WTC11 (cell line): ENCODE measurements at regions of chr16 and their contacts with region 1.

Region 1: DNA sequence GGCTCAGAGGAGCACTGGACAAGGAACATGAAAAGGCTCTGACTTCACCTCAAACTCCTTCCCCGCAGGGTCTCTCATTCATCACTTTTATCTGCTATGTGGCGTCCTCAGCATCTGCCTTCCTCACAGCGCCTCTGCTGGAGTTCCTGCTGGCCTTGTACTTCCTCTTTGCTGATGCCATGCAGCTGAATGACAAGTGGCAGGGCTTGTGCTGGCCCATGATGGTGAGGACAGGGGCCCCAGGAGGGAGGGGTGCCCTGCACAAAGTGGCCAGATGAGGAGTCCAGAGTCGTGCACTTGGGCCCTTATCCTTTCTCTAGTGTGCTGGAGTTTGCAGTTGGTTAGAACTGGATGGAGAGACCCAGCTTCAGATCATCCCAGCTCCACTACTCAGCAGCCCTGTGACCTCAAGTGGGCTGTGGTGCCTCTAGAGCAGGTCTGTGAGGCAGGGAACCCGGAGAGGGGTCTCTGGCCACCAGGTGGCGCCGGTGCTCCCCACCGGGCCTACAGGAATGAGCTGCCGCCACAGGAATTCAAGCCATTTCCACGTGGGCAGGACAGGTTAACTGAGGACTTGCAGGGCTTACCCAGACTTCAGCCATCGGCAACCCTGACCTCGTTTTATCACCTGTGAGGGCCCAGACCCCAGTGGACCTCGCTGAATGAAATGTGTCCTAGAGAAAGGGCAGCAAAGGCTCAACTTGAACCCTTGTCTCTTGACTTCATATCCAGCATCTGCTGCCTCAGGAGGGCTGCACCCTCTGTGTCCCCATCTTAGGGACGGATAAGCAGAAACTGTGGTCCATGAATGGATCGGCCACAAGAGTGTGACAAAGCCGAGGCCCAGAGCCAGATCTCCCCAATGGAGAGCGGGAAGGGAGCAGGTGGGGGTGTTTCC is 4.0 kb downstream of the CMTM3 start:
- DNase-seq: peak; percentile 94
- ATAC-seq: peak; percentile 54
- H3K4me3 Mint-ChIP-seq: no peak overlapping the region
- H3K27ac Mint-ChIP-seq: peak overlapping the region; percentile 84; the same call in 1 of the 2 replicates
- H3K4me1 Mint-ChIP-seq: peaks cover 26% of the 10 kb centered on the region
- H3K27me3 Mint-ChIP-seq: no peaks in the 10 kb centered on the region
- CTCF ChIP-seq: peak; percentile 75

Region 2: GRCh38 chr16:66406534-66407221 is 201.8 kb before region 1 on chr16:
- CTCF ChIA-PET with region 1: interaction called, 11 read pairs
- POLR2A ChIA-PET with region 1: no interaction called
- DNase-seq: peak; percentile 91
- ATAC-seq: peak; percentile 96
- H3K4me3 Mint-ChIP-seq: peak overlapping the region; percentile 83
- H3K27ac Mint-ChIP-seq: peak overlapping the region; percentile 86; the same call in 1 of the 2 replicates
- H3K4me1 Mint-ChIP-seq: peaks cover 9% of the 10 kb centered on the region
- H3K27me3 Mint-ChIP-seq: peaks cover 13% of the 10 kb centered on the region
- CTCF ChIP-seq: peak; percentile 96

Region 3: GRCh38 chr16:66580605-66581209 is 27.8 kb before region 1 on chr16:
- CTCF ChIA-PET with region 1: interaction called, 17 read pairs
- POLR2A ChIA-PET with region 1: no interaction called
- DNase-seq: no peak
- ATAC-seq: peak; percentile 63
- H3K4me3 Mint-ChIP-seq: no peak overlapping the region
- H3K27ac Mint-ChIP-seq: no peak overlapping the region
- H3K4me1 Mint-ChIP-seq: peaks cover 29% of the 10 kb centered on the region
- H3K27me3 Mint-ChIP-seq: peaks cover 49% of the 10 kb centered on the region
- CTCF ChIP-seq: no peak

Region 4: DNA sequence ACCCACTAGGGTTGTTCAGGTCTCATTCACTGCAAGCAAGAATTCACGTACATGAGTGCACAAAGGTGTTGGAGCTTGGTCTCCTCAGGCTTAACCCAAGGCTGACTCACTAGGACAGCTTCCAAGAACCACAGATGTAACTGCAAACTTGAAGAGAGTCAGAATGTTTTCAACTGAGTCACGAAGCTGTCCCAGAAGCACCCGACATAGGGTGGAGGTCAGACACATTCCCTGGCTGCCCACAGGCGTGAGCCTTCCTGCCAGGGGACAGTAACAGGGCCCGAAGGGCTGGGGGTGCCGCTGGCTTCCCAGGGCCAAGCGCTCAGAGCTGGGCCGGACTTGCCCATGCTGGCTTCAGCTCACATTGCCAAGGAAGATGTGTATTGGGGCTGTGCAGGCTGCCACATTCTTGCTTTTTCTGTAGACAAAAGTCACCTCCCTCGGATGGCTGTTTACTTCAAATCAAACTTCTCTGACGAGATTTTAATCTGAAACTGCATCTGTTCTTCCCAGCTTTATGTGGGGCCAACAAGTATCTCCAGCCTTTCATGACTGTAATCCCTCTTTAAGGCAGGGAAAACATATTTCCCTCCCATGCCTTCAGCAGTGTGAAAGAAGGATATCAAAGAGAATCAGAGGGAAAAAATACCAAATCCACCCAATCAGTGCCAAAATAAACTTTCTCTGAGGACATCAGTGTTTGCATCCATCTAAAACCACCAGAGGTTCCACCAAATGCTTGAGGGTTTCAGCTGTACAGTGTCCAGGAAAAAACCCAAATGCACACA is 10.3 kb after region 1 on chr16:
- CTCF ChIA-PET with region 1: interaction called, 60 read pairs
- POLR2A ChIA-PET with region 1: no interaction called
- DNase-seq: no peak
- ATAC-seq: no peak
- H3K4me3 Mint-ChIP-seq: no peak overlapping the region
- H3K27ac Mint-ChIP-seq: peak overlapping the region; percentile 19; the same call in 1 of the 2 replicates
- H3K4me1 Mint-ChIP-seq: peaks cover 28% of the 10 kb centered on the region
- H3K27me3 Mint-ChIP-seq: no peaks in the 10 kb centered on the region
- CTCF ChIP-seq: no peak

Region 5: DNA sequence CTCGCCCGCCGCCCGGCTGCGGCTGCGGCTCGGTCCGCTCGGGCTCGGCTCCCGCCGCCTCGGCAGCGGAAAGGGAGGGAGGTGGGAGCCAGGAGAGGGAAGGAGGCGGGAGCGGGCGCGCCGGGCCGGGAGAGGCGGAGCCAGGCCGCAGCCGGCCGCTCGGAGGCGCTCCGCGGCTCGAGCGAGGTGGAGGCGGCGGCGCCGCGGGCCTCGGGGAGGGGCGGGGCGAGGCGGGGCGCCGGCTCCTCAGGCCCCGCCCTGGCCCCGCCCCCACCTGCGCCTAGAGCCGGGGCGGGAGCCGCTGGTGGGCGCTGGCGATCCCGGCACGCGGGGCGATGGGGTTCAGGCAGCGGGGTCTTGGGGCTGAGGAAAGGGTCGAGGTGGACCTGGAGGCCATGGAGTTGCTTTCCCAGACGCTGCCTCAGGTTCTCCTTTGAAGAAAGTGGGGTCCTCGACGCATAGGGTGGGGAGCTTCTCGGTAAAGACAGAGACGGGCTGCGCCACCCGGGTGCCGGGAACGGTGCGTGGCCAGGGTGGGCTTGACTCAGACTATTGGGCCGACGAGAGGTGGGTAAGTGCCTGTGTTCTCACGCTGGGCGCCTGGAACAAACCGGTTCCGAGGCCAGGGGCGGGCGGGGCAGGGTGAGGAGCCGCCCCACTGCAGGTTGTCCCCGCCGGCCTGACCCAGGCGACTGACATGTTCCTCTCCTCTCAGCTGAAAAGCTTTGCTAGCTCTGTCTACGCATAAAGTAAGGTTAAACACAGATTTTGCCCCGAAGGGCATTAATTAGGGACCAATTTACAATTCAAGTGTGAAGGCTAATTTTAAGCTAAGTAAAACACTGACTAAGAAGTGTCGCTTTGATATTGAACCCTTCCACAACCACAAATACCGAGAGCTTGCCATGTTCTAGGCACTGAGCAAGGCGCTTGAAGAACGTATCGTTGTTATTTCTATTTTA is 88.5 kb after region 1 on chr16 and contains the start of gene CMTM4:
- CTCF ChIA-PET with region 1: interaction called, 10 read pairs
- POLR2A ChIA-PET with region 1: no interaction called
- DNase-seq: peak; percentile 87
- ATAC-seq: peak; percentile 90
- H3K4me3 Mint-ChIP-seq: peak within 1 kb of the TSS; percentile 78
- H3K27ac Mint-ChIP-seq: peak within 1 kb of the TSS; percentile 65; the same call in 1 of the 2 replicates
- H3K4me1 Mint-ChIP-seq: peaks cover 42% of the 10 kb centered on the region
- H3K27me3 Mint-ChIP-seq: peaks cover 9% of the 10 kb centered on the region
- CTCF ChIP-seq: no peak
- total RNA-seq, gene CMTM4: 56.2 to 60.6 TPM (median 58.5 TPM) in 3 replicates

Region 6: GRCh38 chr16:66758086-66758485 is 149.6 kb after region 1 on chr16:
- CTCF ChIA-PET with region 1: no interaction called
- POLR2A ChIA-PET with region 1: no interaction called
- DNase-seq: no peak
- ATAC-seq: no peak
- H3K4me3 Mint-ChIP-seq: no peak overlapping the region
- H3K27ac Mint-ChIP-seq: no peak overlapping the region
- H3K4me1 Mint-ChIP-seq: no peaks in the 10 kb centered on the region
- H3K27me3 Mint-ChIP-seq: peaks cover 11% of the 10 kb centered on the region
- CTCF ChIP-seq: no peak

Region 7: DNA sequence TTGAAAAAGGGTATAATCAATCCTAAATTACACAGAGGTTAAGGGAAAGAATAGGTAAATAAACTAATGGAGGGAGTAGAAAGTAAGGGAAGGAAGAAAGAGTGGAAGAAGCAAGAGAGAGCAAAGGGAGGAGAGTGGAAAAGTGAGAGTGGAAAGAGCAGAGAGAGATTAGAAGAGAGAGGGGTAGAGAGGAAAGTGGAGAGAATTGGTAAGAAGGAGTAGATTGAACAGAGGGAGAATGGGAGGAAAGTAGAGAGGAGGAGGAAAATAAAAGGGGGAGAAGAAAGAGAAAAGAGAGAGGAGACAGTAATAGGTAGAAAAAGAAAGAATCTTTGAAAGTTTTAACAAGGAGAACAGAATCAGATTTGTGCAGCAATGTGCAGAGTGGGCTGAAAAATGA is 168.0 kb after region 1 on chr16:
- CTCF ChIA-PET with region 1: no interaction called
- POLR2A ChIA-PET with region 1: no interaction called
- DNase-seq: no peak
- ATAC-seq: no peak
- H3K4me3 Mint-ChIP-seq: no peak overlapping the region
- H3K27ac Mint-ChIP-seq: no peak overlapping the region
- H3K4me1 Mint-ChIP-seq: no peaks in the 10 kb centered on the region
- H3K27me3 Mint-ChIP-seq: no peaks in the 10 kb centered on the region
- CTCF ChIP-seq: no peak

Region 8: GRCh38 chr16:66872943-66873684 is 264.6 kb after region 1 on chr16:
- CTCF ChIA-PET with region 1: interaction called, 19 read pairs
- POLR2A ChIA-PET with region 1: no interaction called
- DNase-seq: peak; percentile 90
- ATAC-seq: peak; percentile 91
- H3K4me3 Mint-ChIP-seq: peak overlapping the region; percentile 73
- H3K27ac Mint-ChIP-seq: peak overlapping the region; percentile 89
- H3K4me1 Mint-ChIP-seq: peaks cover 14% of the 10 kb centered on the region
- H3K27me3 Mint-ChIP-seq: peaks cover 10% of the 10 kb centered on the region
- CTCF ChIP-seq: peak; percentile 86